Gastrocnemius medialis (tissue), 4 donors: ENCODE measurements at regions of chr4 and their contacts with region 1.

Region 1: DNA sequence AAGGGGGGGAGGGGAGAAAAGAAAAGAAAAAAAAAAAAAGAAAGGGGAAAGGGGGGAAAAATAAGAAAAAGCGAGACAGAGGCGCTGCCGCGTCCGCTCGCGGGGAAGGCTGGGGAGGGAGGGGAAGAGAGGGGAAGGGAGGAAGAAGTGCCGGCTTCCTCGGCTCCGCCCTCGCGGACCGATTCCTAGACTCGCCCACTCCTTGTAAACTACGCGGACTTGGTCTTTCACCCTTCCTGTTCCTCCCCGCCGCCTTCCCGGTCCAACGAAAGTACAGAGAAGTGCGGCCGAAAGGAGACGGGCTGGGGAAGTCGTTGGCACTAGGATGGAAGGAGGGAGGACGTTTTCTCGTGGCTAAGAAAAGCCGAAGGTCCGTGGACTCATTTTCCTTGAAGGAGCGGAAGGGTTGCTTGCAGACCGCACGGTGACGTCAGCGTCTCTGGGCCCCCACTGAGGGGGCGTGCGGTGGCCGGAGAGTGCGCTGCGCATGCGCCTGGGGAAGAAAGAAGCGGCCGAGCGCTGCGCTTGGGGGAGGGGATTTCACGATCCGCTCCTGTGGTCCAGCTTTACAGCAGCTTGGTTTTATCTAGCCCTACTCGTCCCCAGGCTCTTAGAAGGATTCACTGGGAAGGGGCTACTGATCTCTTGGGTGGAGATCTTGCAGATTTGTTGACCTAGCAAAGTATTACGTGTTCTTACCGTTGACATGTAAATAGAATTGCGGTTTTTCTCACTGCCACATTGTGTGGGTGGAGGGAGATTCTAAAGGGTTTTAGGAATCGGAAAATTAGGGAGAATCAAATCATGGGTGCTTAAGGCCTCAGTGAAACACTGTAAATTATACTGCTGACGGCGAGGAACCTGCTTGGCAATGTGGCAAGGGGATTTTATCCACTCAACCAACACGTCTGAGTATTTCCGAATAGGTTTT is at the start of gene CCNI:
- DNase-seq: peak; percentile 94 to 95
- ATAC-seq: peak; percentile 93
- H3K4me3 ChIP-seq: peak within 1 kb of the TSS; percentile 87 to 95 (median 92)
- H3K27ac ChIP-seq: peak within 1 kb of the TSS; percentile 98 to 99 (median 99)
- H3K4me1 ChIP-seq: peaks cover 40 to 49% of the 10 kb centered on the region in 2 donors
- H3K27me3 ChIP-seq: no peaks in the 10 kb centered on the region
- CTCF ChIP-seq: peak in 1 of 5 experiments; percentile 11
- POLR2A ChIP-seq: peak; percentile 66 to 76
- total RNA-seq, gene CCNI: 82.8 to 138 (median 129) TPM

Region 2: GRCh38 chr4:76148142-76148865 is 927.8 kb before region 1 on chr4 and contains the start of gene NUP54:
- in situ Hi-C with region 1: no loop called
- intact Hi-C with region 1: loop called (anchors 10 kb)
- DNase-seq: peak; percentile 84 to 91
- ATAC-seq: peak; percentile 98 to 99
- H3K4me3 ChIP-seq: peak within 1 kb of the TSS; percentile 66 to 99 (median 89)
- H3K27ac ChIP-seq: peak within 1 kb of the TSS; percentile 82 to 98 (median 92)
- H3K4me1 ChIP-seq: peaks cover 31 to 36% of the 10 kb centered on the region in 2 donors
- H3K27me3 ChIP-seq: no peaks in the 10 kb centered on the region
- CTCF ChIP-seq: no peak
- POLR2A ChIP-seq: peak; percentile 81 to 82
- total RNA-seq, gene NUP54: 15.7 to 22.8 (median 20.0) TPM

Region 3: GRCh38 chr4:76213415-76214176 is 862.5 kb before region 1 on chr4 and contains the start of gene SCARB2:
- in situ Hi-C with region 1: no loop called
- intact Hi-C with region 1: loop called (anchors 10 kb)
- DNase-seq: peak; percentile 85 to 88
- ATAC-seq: peak; percentile 64 to 65
- H3K4me3 ChIP-seq: peak within 1 kb of the TSS; percentile 71 to 98 (median 86)
- H3K27ac ChIP-seq: peak within 1 kb of the TSS; percentile 90 to 97 (median 96)
- H3K4me1 ChIP-seq: peaks cover 81 to 82% of the 10 kb centered on the region in 2 donors
- H3K27me3 ChIP-seq: no peaks in the 10 kb centered on the region
- CTCF ChIP-seq: peak in 3 of 5 experiments; percentile 5 to 25 (median 21)
- POLR2A ChIP-seq: peak; percentile 96 to 98
- total RNA-seq, gene SCARB2: 91.3 to 292 (median 186) TPM

Region 4: GRCh38 chr4:77156533-77156911 is 80.4 kb after region 1 on chr4:
- in situ Hi-C with region 1: no loop called
- intact Hi-C with region 1: loop called (anchors 1 kb)
- DNase-seq: peak; percentile 96 to 98
- ATAC-seq: peak; percentile 99
- H3K4me3 ChIP-seq: peak overlapping the region; percentile 73 to 92 (median 82)
- H3K27ac ChIP-seq: peak overlapping the region; percentile 76 to 87 (median 83)
- H3K4me1 ChIP-seq: peaks cover 0 to 19% of the 10 kb centered on the region in 2 donors
- H3K27me3 ChIP-seq: no peaks in the 10 kb centered on the region
- CTCF ChIP-seq: no peak
- POLR2A ChIP-seq: no peak

Region 5: GRCh38 chr4:77862478-77863216 is 786.5 kb after region 1 on chr4 and contains the start of gene MRPL1:
- in situ Hi-C with region 1: no loop called
- intact Hi-C with region 1: loop called (anchors 10 kb)
- DNase-seq: peak; percentile 85 to 89
- ATAC-seq: peak; percentile 96 to 97
- H3K4me3 ChIP-seq: peak within 1 kb of the TSS; percentile 59 to 86 (median 76)
- H3K27ac ChIP-seq: peak within 1 kb of the TSS; percentile 82 to 94 (median 88)
- H3K4me1 ChIP-seq: peaks cover 11 to 12% of the 10 kb centered on the region in 2 donors
- H3K27me3 ChIP-seq: no peaks in the 10 kb centered on the region
- CTCF ChIP-seq: peak in 2 of 5 experiments; percentile 4 to 38
- POLR2A ChIP-seq: peak; percentile 17 to 65
- total RNA-seq, gene MRPL1: 29.2 to 52.0 (median 31.5) TPM